ENCODE measurements at regions of chr5 and their contacts with region 1.

Region 1: DNA sequence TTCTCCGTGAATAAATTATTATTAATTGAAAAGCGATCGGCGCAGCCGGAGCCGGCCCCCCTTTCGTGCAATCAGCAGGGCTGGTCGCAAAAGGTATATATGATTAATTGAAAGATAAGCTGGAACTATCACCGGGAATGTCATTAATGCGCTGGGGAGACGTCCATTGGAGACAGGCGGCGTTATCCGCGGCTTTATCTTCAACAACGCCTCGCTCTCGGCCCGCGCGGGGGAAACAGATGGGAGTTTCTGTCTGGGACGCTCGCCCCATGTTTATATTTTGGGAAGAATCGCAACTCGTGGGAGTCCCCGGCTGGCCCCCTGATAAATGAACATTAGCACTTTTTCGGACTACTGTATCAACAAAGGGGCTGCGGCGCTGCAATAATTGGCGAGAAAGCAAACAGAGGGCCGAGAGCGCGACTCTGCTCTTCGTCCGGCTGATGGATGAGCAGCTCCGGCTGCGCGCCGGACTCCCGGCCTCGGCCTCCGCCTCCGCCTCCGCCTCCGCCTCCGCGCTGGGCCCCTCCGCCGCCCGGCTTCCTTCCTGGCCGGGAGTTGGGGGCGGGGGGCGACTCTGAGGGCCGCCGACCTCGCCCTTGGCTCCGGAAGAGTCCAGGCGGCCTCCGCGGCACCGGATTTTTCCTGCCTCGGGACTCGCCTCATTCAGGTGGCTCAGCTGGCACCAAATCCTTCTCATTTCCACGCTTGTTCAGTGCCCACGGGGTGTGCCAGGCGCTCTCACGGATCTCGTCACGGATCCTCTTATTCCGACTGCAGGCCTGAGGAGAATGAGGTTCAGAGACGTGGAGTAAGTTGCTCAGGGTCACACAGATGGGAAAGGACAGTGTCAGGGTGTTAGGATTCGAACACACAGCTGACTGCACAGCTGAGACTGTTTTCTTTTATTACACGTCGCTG is 3.6 kb upstream of the NKX2-5 start:
- DNase-seq: no peak
- H3K4me3 Mint-ChIP-seq: no peak overlapping the region
- H3K27ac Mint-ChIP-seq: no peak overlapping the region
- H3K4me1 Mint-ChIP-seq: peaks cover 7% of the 10 kb centered on the region
- H3K27me3 Mint-ChIP-seq: peaks cover 92% of the 10 kb centered on the region

Region 2: GRCh38 chr5:171310819-171311697 is 1927.5 kb before region 1 on chr5:
- intact Hi-C with region 1: loop called (anchors 2 kb)
- DNase-seq: no peak
- H3K4me3 Mint-ChIP-seq: no peak overlapping the region
- H3K27ac Mint-ChIP-seq: no peak overlapping the region
- H3K4me1 Mint-ChIP-seq: peaks cover 4% of the 10 kb centered on the region
- H3K27me3 Mint-ChIP-seq: peaks cover 63% of the 10 kb centered on the region

Region 3: DNA sequence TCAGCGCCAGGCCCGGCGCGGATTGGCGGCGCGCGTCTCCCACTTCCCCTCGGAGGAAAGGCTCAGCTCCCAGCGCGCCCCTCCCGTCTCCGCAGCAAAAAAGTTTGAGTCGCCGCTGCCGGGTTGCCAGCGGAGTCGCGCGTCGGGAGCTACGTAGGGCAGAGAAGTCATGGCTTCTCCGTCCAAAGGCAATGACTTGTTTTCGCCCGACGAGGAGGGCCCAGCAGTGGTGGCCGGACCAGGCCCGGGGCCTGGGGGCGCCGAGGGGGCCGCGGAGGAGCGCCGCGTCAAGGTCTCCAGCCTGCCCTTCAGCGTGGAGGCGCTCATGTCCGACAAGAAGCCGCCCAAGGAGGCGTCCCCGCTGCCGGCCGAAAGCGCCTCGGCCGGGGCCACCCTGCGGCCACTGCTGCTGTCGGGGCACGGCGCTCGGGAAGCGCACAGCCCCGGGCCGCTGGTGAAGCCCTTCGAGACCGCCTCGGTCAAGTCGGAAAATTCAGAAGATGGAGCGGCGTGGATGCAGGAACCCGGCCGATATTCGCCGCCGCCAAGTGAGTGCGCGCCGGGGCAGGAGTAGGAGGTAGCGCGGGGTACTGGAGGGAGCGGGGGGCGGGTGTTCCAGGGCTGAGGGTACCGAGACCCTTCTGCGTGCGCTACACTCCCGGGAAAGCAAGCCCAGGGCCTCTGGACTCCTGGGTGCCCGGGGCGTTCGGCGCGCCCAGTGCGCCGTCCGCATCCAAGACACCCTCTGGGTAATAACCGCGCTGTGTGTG is 1486.1 kb after region 1 on chr5 and contains the start of gene MSX2:
- intact Hi-C with region 1: loop called (anchors 5 kb)
- DNase-seq: peak; percentile 9
- H3K4me3 Mint-ChIP-seq: peak within 1 kb of the TSS; percentile 6
- H3K27ac Mint-ChIP-seq: no peak within 1 kb of the TSS
- H3K4me1 Mint-ChIP-seq: peaks cover 5% of the 10 kb centered on the region
- H3K27me3 Mint-ChIP-seq: peaks cover 85% of the 10 kb centered on the region
- total RNA-seq, gene MSX2: not detected in 2 replicates

Region 4: GRCh38 chr5:174732036-174733020 is 1493.8 kb after region 1 on chr5:
- intact Hi-C with region 1: loop called (anchors 5 kb)
- DNase-seq: no peak
- H3K4me3 Mint-ChIP-seq: no peak overlapping the region
- H3K27ac Mint-ChIP-seq: no peak overlapping the region
- H3K4me1 Mint-ChIP-seq: peaks cover 3% of the 10 kb centered on the region
- H3K27me3 Mint-ChIP-seq: peaks cover 87% of the 10 kb centered on the region

Measured in activated T-helper 2 cell treated with anti-CD3 and anti-CD28 coated beads, Interferon-gamma antibody, Interleukin-2, Interleukin-4, amounts not matched to agents 10 μg/mL and 5 μg/mL and 100 μg/mL, durations not matched to agents 14 hours and 24 hours and 36 hours (primary cell).